Mammary epithelial cell (primary cell): ENCODE measurements at regions of chr11 and their contacts with region 1.

Region 1: DNA sequence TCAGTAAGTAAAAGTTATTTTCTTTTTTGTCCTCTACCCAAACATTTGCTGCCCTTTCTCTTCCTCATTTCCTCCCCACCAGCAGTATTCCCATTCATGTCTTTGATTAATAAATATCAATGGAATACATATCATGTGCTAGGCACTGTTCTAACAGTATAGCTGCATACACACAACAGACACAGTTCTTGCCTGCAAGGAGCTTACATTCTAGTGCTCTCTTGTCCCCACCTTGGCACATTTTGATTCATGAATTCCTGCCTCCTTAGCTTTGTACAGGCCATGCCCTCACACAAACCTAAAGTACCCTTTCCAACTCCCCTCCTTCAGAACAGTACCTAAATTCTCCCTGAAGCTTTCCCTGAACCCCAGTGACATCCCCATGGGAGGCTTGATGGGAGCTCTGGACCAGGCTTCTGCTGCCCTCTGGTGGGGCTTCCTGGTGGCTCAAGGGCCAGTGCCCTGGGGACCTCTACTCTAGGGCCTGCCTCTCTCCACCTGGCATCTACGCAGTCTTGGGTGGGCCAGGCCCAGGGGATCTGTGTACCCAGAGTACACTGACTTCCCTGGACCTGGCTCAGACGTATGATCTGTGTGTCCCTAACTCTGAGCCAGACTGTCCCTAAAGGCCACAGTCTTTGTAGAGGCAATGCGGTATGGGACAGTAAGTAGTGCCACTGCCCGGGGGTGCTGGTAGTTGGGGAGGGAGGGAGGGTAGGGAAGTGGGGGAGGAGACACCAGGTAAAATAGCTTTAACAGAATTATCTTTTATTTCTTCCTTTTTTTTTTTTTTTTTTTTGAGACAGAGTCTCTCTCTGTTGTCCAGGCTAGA is 14.1 kb downstream of the RPS13 start:
- DNase-seq: peak; percentile 28
- H3K4me3 ChIP-seq: no peak overlapping the region
- H3K27ac ChIP-seq: no peak overlapping the region
- H3K4me1 ChIP-seq: no peaks in the 10 kb centered on the region
- H3K27me3 ChIP-seq: no peaks in the 10 kb centered on the region
- CTCF ChIP-seq: peak; percentile 76 to 89

Region 2: DNA sequence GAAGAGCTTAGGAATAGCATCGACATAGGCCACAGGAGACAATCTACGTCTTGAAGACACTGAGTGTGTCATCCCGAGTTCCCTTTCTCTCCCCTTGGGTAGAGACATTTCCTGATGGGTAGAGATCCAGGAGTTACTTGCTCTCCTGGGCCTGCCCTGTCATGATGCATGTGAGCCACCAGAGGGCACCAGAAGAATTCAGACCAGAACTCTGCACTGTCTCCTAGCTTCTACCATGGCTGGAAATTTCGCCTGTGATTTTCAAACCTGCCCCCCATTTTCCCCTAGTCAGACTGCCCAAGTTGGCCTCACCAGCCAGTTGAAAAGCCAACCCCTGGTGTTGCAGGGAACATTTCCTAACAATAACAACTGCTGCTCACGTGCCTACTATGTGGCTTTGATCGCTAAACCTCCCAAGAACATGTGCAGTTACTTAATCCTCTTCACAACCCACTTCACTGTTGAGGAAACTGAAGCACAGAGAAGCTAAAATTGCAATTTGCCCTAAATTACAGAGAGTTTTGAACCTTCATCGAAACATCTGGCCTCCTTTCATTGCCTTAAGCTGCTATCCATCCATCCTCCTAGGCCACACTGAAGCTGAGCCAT is 277.8 kb before region 1 on chr11:
- CTCF ChIA-PET with region 1: no interaction called
- dilution Hi-C with region 1: no loop called
- in situ Hi-C with region 1: no loop called
- intact Hi-C with region 1: loop called (anchors 1 kb)
- DNase-seq: peak; percentile 61
- H3K4me3 ChIP-seq: no peak overlapping the region
- H3K27ac ChIP-seq: no peak overlapping the region
- H3K4me1 ChIP-seq: peaks cover 46% of the 10 kb centered on the region
- H3K27me3 ChIP-seq: no peaks in the 10 kb centered on the region
- CTCF ChIP-seq: peak; percentile 93 to 96

Region 3: GRCh38 chr11:16820324-16821092 is 242.9 kb before region 1 on chr11:
- CTCF ChIA-PET with region 1: interaction called, 8 read pairs
- dilution Hi-C with region 1: no loop called
- in situ Hi-C with region 1: loop called (anchors 10 to 25 kb)
- intact Hi-C with region 1: loop called (anchors 1 kb)
- DNase-seq: peak; percentile 75
- H3K4me3 ChIP-seq: no peak overlapping the region
- H3K27ac ChIP-seq: no peak overlapping the region
- H3K4me1 ChIP-seq: peaks cover 15% of the 10 kb centered on the region
- H3K27me3 ChIP-seq: no peaks in the 10 kb centered on the region
- CTCF ChIP-seq: peak; percentile 76 to 91

Region 4: GRCh38 chr11:16945671-16946469 is 117.5 kb before region 1 on chr11:
- CTCF ChIA-PET with region 1: interaction called, 7 read pairs
- dilution Hi-C with region 1: loop called (anchors 5 kb)
- in situ Hi-C with region 1: loop called (anchors 5 kb)
- intact Hi-C with region 1: loop called (anchors 1 kb)
- DNase-seq: peak; percentile 65
- H3K4me3 ChIP-seq: no peak overlapping the region
- H3K27ac ChIP-seq: no peak overlapping the region
- H3K4me1 ChIP-seq: peaks cover 7% of the 10 kb centered on the region
- H3K27me3 ChIP-seq: no peaks in the 10 kb centered on the region
- CTCF ChIP-seq: peak; percentile 75 to 93

Region 5: DNA sequence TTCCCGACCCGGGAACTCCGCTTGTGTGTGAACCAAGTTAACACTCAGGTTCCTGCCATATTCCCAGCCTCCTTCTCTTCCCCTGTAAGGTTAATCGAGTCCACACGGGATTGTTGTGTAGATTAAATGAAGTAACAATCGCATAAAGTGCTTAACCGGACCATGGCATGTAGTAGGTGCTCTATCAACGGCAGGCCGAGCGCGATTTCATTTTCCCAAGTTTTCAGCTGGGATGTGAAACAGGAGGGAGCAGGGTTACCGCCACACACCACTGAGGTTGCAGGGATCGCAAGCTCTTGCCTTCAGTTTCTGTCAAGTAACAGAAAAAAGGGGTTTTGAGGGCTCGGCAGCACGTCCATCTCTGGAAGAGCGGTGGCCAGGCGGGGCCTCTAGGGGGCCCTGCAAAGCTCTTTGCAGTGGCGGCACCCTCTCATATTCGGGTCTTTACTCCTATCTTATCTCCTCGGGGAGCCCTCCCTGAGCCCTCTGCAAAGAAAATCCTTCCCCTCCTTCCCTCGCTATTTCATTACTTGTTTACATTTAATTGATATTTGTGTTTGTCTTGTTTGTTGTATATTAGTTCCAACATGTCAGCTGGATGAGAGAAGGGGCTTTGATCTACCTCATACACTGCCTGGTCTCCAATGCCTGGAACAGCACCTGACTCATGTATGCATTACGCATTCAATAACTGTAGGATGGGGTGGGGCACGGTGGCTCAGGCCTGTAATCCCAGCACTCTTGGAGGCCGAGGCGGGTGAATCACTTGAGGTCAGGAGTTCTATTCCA is 48.4 kb before region 1 on chr11:
- CTCF ChIA-PET with region 1: no interaction called
- dilution Hi-C with region 1: loop called (anchors 5 kb)
- in situ Hi-C with region 1: no loop called
- intact Hi-C with region 1: no loop called
- DNase-seq: no peak
- H3K4me3 ChIP-seq: peak overlapping the region in 1 of 3 experiments; percentile 4
- H3K27ac ChIP-seq: no peak overlapping the region
- H3K4me1 ChIP-seq: peaks cover 15% of the 10 kb centered on the region
- H3K27me3 ChIP-seq: peaks cover 23% of the 10 kb centered on the region
- CTCF ChIP-seq: no peak